A549 (cell line): ENCODE measurements at regions of chr2 and their contacts with region 1.

Region 1: DNA sequence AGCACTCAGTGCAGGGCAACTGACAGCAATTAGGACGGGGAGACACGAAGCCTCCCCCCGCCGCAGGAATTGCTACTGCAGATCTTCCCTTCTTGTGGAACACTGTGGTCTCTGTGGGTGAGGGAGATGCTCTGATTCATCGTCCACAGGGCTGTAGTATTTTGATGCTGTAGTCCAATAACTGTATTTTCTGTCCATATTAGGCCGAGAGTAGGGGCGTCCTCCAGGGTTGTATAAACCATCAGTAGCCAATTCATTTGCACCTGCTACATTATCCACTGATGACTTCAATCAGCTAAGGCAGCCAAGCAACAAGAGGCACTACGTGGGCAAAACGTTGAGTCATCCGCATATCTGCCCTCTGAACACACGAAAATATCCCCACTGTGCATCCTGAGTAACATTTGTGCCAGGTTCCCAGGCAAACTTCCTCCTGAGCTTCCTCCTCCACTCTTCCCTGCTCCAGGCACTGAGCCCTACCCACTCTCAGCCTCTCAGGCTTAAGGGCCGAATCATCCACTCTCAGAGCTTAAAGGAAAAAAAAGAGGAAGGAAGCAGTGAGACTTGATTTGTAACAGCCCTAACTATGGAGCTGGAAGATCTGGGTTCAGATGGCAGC is 62.1 kb downstream of the LBH start:
- DNase-seq: peak; percentile 40 to 94
- ATAC-seq: peak; percentile 88 to 93
- H3K4me3 ChIP-seq: no peak overlapping the region
- H3K27ac ChIP-seq: peak overlapping the region; percentile 72 to 85
- H3K4me1 ChIP-seq: peaks cover 40% of the 10 kb centered on the region
- CTCF ChIP-seq: no peak
- EP300 ChIP-seq: peak; percentile 73 to 83; a peak in 3 of 5 replicates
- POLR2A ChIP-seq: no peak
- RAD21 ChIP-seq: 0 out of 5 replicates have a peak, but pooled peaks of 1 of the 2 experiments have one; percentile 36

Region 2: GRCh38 chr2:30273261-30273861 is 20.1 kb before region 1 on chr2:
- CTCF ChIA-PET with region 1: interaction called, 11 read pairs
- POLR2A ChIA-PET with region 1: interaction called, 10 read pairs
- DNase-seq: peak; percentile 44 to 91
- ATAC-seq: peak; percentile 28 to 53; a peak in 4 of 6 replicates
- H3K4me3 ChIP-seq: no peak overlapping the region
- H3K27ac ChIP-seq: peak overlapping the region; percentile 82 to 91
- H3K4me1 ChIP-seq: peaks cover 62% of the 10 kb centered on the region
- CTCF ChIP-seq: no peak
- EP300 ChIP-seq: peak; percentile 34 to 77; a peak in 3 of 5 replicates
- POLR2A ChIP-seq: no peak
- RAD21 ChIP-seq: peak; percentile 7 to 34; a peak in 3 of 5 replicates

Region 3: GRCh38 chr2:30282086-30282485 is 11.3 kb before region 1 on chr2:
- CTCF ChIA-PET with region 1: interaction called, 29 read pairs
- POLR2A ChIA-PET with region 1: interaction called, 3 read pairs
- DNase-seq: no peak
- ATAC-seq: no peak
- H3K4me3 ChIP-seq: no peak overlapping the region
- H3K27ac ChIP-seq: peak overlapping the region in 1 of 2 experiments; percentile 53; a peak in 3 of 6 replicates
- H3K4me1 ChIP-seq: peaks cover 7% of the 10 kb centered on the region; the same call in 2 of the 3 replicates
- CTCF ChIP-seq: no peak
- EP300 ChIP-seq: no peak
- POLR2A ChIP-seq: no peak
- RAD21 ChIP-seq: no peak